Left cardiac atrium (tissue), 4 donors: ENCODE measurements at regions of chr9 and their contacts with region 1.

Region 1: GRCh38 chr9:5586391-5586802 is 42.5 kb upstream of the RIC1 start:
- DNase-seq: no peak
- ATAC-seq: no peak

Region 2: GRCh38 chr9:5186416-5187169 is 399.8 kb before region 1 on chr9:
- intact Hi-C with region 1: loop called in 1 of 2 experiments (anchors 5 kb)
- DNase-seq: peak; percentile 46
- ATAC-seq: peak; percentile 67

Region 3: GRCh38 chr9:5375091-5375490 is 211.3 kb before region 1 on chr9:
- intact Hi-C with region 1: no loop called
- DNase-seq: no peak
- ATAC-seq: no peak

Region 4: DNA sequence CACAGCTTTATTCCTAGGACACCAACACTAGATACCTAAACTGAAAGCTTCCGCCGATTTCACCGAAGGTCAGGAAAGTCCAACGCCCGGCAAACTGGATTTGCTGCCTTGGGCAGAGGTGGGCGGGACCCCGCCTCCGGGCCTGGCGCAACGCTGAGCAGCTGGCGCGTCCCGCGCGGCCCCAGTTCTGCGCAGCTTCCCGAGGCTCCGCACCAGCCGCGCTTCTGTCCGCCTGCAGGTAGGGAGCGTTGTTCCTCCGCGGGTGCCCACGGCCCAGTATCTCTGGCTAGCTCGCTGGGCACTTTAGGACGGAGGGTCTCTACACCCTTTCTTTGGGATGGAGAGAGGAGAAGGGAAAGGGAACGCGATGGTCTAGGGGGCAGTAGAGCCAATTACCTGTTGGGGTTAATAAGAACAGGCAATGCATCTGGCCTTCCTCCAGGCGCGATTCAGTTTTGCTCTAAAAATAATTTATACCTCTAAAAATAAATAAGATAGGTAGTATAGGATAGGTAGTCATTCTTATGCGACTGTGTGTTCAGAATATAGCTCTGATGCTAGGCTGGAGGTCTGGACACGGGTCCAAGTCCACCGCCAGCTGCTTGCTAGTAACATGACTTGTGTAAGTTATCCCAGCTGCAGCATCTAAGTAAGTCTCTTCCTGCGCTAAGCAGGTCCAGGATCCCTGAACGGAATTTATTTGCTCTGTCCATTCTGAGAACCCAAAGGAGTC is 135.9 kb before region 1 on chr9 and contains the start of gene CD274:
- intact Hi-C with region 1: loop called (anchors 2 to 5 kb)
- DNase-seq: peak; percentile 94
- ATAC-seq: peak; percentile 99
- total RNA-seq, gene CD274: 7.3 to 12.4 TPM

Region 5: GRCh38 chr9:5499889-5500398 is 86.5 kb before region 1 on chr9:
- intact Hi-C with region 1: loop called in 1 of 2 experiments (anchors 5 kb)
- DNase-seq: peak; percentile 59
- ATAC-seq: peak; percentile 25 to 65

Region 6: DNA sequence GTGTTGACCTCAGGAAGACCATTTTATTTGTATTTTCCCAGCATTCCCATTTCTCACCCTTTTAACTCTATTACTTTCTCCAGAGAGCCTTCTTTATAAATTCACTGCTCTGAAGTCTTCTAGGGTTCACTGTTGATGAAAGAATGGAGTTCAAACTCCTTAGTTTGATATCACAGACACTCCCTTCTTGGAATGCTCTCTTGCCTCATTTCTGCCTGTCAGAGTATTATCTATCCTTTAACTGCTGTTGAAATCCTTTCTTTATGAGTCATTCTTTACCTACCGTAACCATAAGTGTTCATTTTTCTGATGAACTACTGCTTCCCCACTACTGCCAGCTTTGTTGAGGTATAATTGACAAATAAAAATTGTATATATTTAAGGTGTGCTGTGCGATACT is 46.8 kb after region 1 on chr9:
- intact Hi-C with region 1: no loop called
- DNase-seq: no peak
- ATAC-seq: no peak